Esophagus squamous epithelium (tissue), 5 donors: ENCODE measurements at regions of chr10 and their contacts with region 1.

Region 1: DNA sequence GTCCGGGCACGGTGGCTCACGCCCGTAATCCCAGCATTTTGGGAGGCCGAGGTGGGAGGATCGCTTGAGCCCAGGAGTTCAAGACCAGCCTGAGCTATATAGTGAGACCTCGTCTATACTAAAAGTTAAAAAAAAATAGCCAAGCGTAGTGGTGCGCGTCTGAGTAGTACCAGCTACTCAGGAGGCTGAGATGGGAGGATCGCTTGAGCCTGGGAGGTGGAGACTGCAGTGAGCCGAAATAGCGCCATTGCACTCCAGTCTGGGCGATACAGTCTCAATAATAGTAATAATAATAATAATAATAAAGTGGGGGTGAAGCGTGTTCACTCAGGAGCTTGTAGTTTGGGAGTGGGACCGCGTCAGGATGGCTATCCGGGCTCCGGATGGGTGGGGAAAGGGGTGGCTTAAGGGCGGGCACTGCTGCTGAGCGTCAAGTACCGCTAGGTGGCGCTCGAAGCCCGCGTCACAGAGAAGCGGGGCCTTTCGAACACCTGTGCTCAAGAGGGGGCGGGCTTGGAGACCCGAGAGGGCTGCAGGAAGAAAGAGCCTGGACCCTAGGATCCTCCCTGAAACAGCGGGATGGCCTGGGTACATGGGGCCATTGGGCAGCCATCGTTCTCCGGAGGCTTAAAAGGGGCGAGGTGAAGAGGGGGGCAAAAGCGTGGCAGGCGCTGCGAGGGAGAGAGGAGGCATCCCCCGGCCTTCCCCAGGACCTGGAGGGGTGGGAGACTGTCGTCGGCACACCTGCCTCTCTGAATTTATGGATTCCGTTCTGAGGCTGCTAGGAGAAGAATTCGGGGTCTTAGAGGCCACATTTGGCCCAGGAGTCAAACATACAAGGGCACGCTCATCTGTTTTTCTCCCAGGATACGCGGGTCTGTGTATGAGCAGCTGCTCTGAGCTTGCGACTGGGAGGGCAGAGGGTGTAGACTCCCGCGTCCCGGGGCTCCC is 14.5 kb downstream of the LBX1 start:
- DNase-seq: no peak
- H3K4me3 ChIP-seq: peak overlapping the region in 1 of 4 donors; percentile 21
- H3K27ac ChIP-seq: no peak overlapping the region
- H3K4me1 ChIP-seq: peaks cover 25 to 56% (median 43%) of the 10 kb centered on the region in 3 donors
- H3K27me3 ChIP-seq: peaks cover 43 to 100% (median 60%) of the 10 kb centered on the region in 4 donors
- CTCF ChIP-seq: peak; percentile 73 to 86 (median 78)
- POLR2A ChIP-seq: no peak

Region 2: GRCh38 chr10:99906470-99906869 is 1308.3 kb before region 1 on chr10:
- intact Hi-C with region 1: no loop called
- DNase-seq: no peak
- H3K4me3 ChIP-seq: no peak overlapping the region
- H3K27ac ChIP-seq: peak overlapping the region in 1 of 4 donors; percentile 61
- H3K4me1 ChIP-seq: peaks cover 0 to 20% (median 0%) of the 10 kb centered on the region in 3 donors
- H3K27me3 ChIP-seq: no peaks in the 10 kb centered on the region
- CTCF ChIP-seq: no peak
- POLR2A ChIP-seq: no peak

Region 3: DNA sequence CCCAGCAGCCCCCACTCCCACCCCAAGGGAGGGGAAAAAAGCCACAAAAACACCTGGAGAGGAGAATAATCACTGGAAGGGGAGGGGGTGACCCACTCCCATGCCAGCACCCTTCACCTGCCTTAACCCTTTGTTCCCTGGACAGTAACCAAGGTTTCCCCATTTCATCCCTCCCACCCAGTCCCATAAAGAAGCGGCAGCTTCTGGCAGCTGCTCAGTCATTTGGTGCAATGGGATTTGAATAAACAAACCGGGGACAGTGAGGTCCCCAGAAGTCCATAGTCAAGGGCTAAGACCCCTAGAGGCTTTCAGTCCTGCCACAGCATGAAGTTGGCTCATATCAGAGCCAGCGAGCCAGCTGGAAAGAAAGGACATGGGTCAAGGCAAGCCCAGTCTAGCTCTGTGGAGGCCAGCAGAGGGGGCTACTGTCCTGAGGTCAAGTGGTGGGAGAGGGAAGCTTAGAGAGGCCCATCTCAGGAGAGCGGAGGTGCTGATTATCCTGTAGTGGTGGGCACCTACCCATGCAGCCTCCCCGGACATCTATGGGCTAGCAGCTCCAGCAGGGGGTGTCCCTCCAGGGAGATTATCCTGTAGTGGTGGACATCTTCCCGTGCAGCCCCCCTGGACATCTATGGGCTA is 73.4 kb after region 1 on chr10:
- intact Hi-C with region 1: loop called (anchors 5 kb)
- DNase-seq: no peak
- H3K4me3 ChIP-seq: no peak overlapping the region
- H3K27ac ChIP-seq: no peak overlapping the region
- H3K4me1 ChIP-seq: peaks cover 11 to 42% (median 19%) of the 10 kb centered on the region in 3 donors
- H3K27me3 ChIP-seq: peaks cover 6 to 100% (median 23%) of the 10 kb centered on the region in 4 donors
- CTCF ChIP-seq: no peak
- POLR2A ChIP-seq: no peak

Region 4: DNA sequence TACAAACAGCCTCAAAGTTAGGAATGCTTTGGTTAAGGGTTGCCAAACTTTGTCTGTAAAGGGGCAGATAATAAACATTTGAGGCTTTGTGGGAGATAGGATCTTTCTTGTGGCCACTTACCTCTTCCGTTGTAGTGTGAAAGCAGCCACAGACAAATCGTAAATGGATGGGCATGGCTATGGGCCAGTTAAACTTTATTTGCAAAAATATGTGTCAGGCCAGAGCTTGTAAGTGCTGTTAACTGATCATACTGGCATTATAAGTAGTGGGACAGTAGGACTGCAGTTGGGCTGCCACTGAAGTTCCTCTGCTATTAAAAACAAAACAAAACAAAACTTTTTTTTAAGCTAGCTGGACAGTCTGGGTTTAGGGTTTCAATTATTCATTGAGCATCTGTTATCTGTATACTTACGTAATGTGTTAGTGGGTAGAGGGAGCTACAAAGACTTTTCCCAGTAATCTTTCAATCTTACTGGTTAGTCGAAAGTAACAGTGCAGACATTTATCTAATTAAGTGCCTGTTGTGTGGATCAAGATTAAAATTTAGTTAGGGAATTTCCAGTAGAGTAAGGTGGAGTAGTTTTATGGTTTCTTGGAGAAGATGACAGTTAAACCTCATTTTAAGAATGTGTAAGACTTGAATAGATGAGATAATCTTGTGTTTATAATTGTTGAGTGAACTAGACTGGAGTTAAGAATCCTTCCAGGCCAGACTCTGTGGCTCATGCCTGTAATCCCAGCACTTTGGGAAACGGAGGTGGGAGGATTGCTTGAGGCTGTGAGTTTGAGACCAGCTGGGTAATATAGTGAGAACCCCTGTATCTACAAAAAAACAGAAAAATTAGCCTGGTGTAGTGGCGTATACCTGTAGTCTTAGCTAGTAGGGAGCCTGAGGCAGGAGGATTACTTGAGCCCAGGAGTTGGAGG is 239.3 kb after region 1 on chr10:
- intact Hi-C with region 1: loop called (anchors 10 kb)
- DNase-seq: no peak
- H3K4me3 ChIP-seq: no peak overlapping the region
- H3K27ac ChIP-seq: no peak overlapping the region
- H3K4me1 ChIP-seq: peaks cover 0 to 8% (median 3%) of the 10 kb centered on the region in 3 donors
- H3K27me3 ChIP-seq: no peaks in the 10 kb centered on the region
- CTCF ChIP-seq: no peak
- POLR2A ChIP-seq: no peak

Region 5: DNA sequence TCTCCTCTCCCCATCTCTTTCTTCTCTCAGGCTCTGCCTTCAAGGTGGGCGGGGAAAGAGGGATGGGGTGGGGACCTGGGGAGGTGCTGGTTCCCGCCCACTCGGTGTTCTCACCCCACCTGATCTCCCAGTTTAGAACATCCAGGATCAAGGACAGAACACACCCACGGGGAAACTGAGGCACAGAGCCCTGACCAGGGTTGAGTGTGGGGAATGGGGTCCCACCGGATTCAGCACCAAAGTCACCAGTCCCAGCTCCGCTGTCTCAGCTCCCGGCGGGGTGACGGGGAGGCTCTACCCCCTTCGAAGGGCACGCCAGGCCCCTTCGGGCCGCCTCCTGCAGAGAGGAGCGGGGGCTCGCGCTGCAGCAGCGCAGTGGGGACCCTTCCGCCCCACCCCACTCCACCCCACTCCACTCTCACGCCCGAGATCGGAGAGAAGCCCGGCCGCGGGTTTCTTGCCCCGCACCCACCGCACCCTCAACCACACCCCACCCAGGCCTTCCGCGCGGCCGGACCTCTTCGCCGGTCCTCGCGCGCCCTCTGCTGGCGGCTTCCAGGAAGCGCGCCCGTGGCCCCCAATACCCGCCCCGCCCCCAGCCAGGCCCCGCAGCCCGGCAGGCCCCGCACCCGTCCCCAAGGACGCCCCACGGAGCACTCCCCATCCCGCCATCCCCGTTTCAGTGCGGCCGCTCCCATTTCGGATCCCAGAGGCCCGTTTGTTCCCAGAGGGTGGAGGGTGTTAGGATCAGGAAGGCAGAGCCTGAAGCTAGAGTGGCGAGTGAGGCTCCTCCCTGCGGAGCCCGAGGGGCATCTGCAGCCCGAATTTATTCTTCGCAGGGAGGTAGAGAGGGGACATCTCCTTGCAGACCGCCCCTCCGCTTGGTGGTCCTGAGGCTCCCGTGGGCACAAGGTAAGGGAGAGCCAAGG is 355.4 kb after region 1 on chr10:
- intact Hi-C with region 1: loop called (anchors 5 kb)
- DNase-seq: no peak
- H3K4me3 ChIP-seq: peak overlapping the region; percentile 45 to 74 (median 66)
- H3K27ac ChIP-seq: peak overlapping the region in 3 of 4 donors; percentile 61 to 74 (median 66)
- H3K4me1 ChIP-seq: peaks cover 19 to 32% (median 22%) of the 10 kb centered on the region in 3 donors
- H3K27me3 ChIP-seq: peaks cover 4 to 63% (median 15%) of the 10 kb centered on the region in 4 donors
- CTCF ChIP-seq: peak; percentile 79 to 96 (median 85)
- POLR2A ChIP-seq: no peak